Activated CD4-positive, alpha-beta T cell treated with anti-CD3 and anti-CD28 coated beads for 36 hours (primary cell): ENCODE measurements at regions of chr7 and their contacts with region 1.

Region 1: DNA sequence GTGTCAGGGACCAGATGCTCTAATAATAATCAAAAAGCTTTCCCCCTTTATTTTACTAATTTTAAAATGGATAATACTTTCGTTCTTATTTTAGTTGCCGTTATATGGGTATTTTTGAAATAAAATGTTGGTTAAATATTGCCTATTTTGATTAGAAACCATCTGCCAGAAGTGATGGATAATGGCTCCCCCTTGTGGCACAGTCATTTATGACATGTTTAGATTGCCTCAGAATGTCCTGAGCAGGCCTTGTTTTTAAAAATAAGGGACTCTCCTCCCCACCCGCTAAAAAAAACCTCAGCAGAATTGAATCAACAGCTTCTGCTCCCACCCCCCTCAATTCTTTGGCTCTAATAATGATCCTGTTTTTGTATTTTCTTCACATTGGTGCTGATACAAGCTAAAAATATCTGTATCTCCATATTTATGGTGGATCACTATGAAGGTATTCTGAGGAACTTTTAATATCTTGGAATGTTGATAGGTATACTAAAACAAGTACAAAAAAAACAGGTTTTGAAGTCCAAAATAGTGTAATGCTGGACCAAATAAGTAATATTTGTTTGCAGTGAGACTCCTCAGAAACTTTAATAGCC is 38.8 kb downstream of the TMEM60 start:
- DNase-seq: peak; percentile 78
- ATAC-seq: peak; percentile 81
- H3K4me3 Mint-ChIP-seq: no peak overlapping the region
- H3K27ac Mint-ChIP-seq: no peak overlapping the region
- H3K4me1 Mint-ChIP-seq: peaks cover 31% of the 10 kb centered on the region
- H3K27me3 Mint-ChIP-seq: no peaks in the 10 kb centered on the region

Region 2: DNA sequence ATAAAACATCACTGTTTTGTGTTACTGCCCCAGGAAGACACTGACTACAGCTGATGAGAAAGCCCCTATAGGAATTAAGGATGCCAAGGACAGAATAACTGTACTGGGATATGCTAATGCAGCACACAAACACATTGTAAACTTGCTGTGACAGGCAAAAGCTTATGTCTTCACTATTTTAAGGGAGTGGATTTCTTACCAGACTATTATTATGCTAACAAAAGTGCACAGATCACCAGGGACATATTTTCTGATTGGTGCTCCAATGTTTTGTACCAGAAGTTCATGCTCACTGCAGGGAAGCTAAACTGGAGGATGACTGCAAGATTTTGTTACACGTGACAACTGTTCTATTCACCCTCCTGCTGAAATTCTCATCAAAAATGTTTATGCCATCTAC is 270.4 kb before region 1 on chr7:
- CTCF ChIA-PET with region 1: no interaction called
- POLR2A ChIA-PET with region 1: no interaction called
- intact Hi-C with region 1: no loop called
- DNase-seq: no peak
- ATAC-seq: no peak
- H3K4me3 Mint-ChIP-seq: no peak overlapping the region
- H3K27ac Mint-ChIP-seq: no peak overlapping the region
- H3K4me1 Mint-ChIP-seq: no peaks in the 10 kb centered on the region
- H3K27me3 Mint-ChIP-seq: peaks cover 2% of the 10 kb centered on the region

Region 3: GRCh38 chr7:77696198-77697028 is 63.0 kb before region 1 on chr7 and contains the start of gene RSBN1L:
- CTCF ChIA-PET with region 1: interaction called, 5 read pairs
- POLR2A ChIA-PET with region 1: no interaction called
- intact Hi-C with region 1: loop called (anchors 1 to 2 kb)
- DNase-seq: peak; percentile 99
- ATAC-seq: peak; percentile 98
- H3K4me3 Mint-ChIP-seq: peak within 1 kb of the TSS; percentile 99
- H3K27ac Mint-ChIP-seq: peak within 1 kb of the TSS; percentile 95
- H3K4me1 Mint-ChIP-seq: peaks cover 45% of the 10 kb centered on the region
- H3K27me3 Mint-ChIP-seq: no peaks in the 10 kb centered on the region
- total RNA-seq, gene RSBN1L: 21.0 to 26.3 TPM

Region 4: DNA sequence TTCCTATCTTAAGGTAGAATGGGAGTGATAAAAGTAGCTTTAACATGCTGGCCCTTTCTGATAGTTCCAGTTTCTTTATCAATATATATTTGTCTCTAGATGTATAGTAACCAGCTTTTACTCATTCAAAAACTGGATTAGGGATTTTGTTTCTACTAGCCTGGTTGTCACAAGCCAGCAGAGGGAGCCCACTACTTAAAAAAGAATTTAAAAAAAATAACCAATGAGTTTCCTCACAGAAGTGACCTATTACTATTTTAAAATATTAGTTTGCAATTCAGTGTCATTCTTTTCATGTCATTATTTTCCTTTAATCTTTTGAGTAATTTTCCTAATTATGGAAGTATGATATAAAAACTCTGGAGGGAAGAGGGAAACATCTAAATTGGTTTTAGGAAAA is 181.3 kb after region 1 on chr7:
- CTCF ChIA-PET with region 1: interaction called, 3 read pairs
- POLR2A ChIA-PET with region 1: no interaction called
- intact Hi-C with region 1: loop called in 1 of 2 experiments (anchors 5 kb)
- DNase-seq: peak; percentile 21
- ATAC-seq: no peak
- H3K4me3 Mint-ChIP-seq: no peak overlapping the region
- H3K27ac Mint-ChIP-seq: no peak overlapping the region
- H3K4me1 Mint-ChIP-seq: peaks cover 13% of the 10 kb centered on the region
- H3K27me3 Mint-ChIP-seq: no peaks in the 10 kb centered on the region